ENCODE measurements at regions of chr14 and their contacts with region 1.

Region 1: DNA sequence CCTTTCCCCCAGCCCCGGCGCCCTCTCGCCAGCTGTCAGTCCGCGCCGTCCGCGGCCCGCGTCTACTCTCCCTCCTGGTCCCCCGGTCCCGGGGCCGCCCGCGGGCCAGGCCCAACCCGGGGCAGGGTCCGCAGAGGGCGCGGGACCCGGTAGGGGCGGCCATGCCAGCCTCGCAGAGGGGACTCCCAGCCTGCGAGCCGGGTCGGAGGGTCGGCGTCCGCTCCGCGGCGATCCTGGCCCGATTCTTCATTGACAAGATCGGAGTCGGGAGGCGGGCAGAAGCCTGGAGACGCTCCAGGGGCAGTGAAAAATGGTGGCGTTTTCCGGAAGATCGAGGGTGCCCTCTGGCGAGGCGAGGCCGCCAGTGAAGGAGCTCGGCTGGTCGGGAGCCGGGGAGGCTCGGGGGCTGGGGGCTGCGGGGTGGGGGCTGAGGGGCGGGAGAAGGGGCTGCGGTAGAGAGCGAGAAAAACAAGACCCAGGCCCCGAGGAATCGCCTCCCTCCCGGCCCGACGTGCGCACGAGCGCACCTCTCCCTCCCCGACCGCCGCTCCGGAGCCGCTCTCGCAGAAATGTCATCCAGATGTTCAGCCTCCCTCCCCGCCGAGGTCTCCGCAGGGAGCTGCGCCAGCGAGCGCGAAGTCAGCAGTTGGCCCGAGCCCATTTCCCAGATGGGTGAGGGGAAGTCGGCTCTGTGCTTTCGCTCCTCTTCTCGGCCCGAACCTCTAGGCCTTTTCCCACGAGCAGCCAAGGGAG is 647 bp upstream of the TGFB3 start:
- DNase-seq: peak; percentile 64 to 89 (median 73)
- ATAC-seq: peak; percentile 69
- H3K4me3 ChIP-seq: peak overlapping the region; percentile 58
- H3K4me3 Mint-ChIP-seq: peak overlapping the region; percentile 93
- H3K27ac ChIP-seq: peak overlapping the region; percentile 40 to 43
- H3K27ac Mint-ChIP-seq: peak overlapping the region; percentile 83
- H3K4me1 ChIP-seq: peaks cover 57% of the 10 kb centered on the region
- H3K4me1 Mint-ChIP-seq: peaks cover 58% of the 10 kb centered on the region
- H3K27me3 ChIP-seq: no peaks in the 10 kb centered on the region
- H3K27me3 Mint-ChIP-seq: no peaks in the 10 kb centered on the region
- CTCF ChIP-seq: peak; percentile 61

Region 2: DNA sequence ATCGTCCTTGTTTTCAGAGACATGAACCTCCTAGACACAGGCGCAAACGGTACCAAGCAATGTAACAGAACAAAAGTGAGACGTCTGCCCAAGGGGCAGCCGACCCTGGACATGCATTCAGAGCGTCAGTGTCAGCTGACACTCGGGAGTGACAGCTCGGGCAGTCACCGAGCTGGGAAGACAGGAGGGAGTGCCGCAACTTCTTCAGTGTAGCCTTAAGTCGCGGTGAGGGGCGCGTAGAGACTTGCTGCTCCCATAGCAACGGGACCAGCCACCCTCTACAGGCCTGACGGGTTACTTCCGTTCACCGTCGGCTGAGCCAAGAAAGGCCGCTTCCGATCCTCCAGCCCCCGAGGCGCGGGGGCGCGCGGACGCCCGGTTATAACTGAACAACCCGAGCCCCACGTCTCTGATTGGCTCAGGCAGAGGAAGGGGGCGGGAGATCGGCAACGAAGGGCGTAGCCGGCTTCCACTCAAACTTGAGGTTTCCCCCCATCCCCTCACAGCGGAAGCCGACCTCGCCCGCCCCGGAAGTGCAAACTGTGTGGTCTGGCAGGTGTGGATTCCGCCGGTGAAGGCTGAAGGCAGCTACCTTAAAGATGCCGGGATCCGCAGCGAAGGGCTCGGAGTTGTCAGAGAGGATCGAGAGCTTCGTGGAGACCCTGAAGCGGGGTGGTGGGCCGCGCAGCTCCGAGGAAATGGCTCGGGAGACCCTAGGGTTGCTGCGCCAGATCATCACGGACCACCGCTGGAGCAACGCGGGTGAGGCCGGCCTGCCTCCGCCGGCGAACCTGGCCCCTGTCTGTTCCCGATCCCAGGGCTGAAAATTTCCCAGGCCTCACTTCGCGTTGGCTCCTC is 979.8 kb before region 1 on chr14 and contains the start of gene EIF2B2:
- CTCF ChIA-PET with region 1: no interaction called
- POLR2A ChIA-PET with region 1: no interaction called
- intact Hi-C with region 1: loop called in 1 of 2 experiments (anchors 5 kb)
- DNase-seq: peak; percentile 97 to 100 (median 98)
- ATAC-seq: peak; percentile 96
- H3K4me3 ChIP-seq: peak within 1 kb of the TSS; percentile 73
- H3K4me3 Mint-ChIP-seq: peak within 1 kb of the TSS; percentile 99
- H3K27ac ChIP-seq: peak within 1 kb of the TSS; percentile 83 to 96
- H3K27ac Mint-ChIP-seq: peak within 1 kb of the TSS; percentile 93
- H3K4me1 ChIP-seq: peaks cover 28% of the 10 kb centered on the region
- H3K4me1 Mint-ChIP-seq: peaks cover 51% of the 10 kb centered on the region
- H3K27me3 ChIP-seq: no peaks in the 10 kb centered on the region
- H3K27me3 Mint-ChIP-seq: no peaks in the 10 kb centered on the region
- CTCF ChIP-seq: no peak
- total RNA-seq, gene EIF2B2: 21.0 to 24.2 TPM

Region 3: DNA sequence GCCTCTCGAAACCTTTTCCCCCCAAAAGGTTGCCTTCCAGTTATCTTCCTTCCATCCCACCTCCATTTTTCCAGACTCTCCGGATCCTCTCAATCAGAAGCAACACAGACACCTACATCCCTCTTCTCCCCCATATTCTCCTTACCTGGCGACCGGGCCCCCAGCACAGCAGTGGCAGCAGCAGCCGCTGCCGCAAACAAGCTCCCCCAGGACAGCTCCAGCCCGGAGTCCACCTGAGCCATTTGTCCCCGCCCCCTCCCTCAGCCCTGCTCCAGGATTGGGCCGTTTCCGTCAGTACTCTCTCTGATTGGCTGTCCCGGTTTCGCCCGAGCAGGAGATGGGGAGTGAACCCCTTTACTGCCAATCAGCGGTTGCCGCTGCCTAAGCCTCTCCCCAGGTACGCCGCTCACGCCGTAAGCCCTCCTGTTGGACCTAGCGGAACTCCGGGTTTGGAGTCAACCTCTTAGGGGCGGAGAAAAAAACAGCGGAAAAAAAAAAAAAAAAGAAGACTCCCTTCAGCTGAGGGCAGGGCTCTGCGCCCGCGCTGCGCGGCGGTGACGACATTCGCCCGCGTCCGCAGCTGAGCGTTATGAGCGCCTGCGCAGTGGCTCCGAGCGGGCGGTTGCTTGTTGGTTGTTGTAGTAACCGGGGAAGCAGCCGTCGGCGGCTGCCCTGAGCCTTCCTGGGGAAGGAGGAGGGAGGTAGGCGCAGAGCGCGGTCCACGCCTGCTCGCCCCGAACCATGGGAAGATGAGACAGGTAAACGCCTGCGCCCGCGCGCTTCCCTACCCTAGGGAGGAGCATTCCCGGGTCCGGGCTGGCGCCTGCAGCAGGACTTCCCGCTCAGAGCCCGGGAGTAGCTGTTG is 321.6 kb before region 1 on chr14 and contains the starts of genes ERG28 and TTLL5:
- CTCF ChIA-PET with region 1: interaction called, 5 read pairs
- POLR2A ChIA-PET with region 1: interaction called, 5 read pairs
- intact Hi-C with region 1: loop called in 1 of 2 experiments (anchors 2 kb)
- DNase-seq: peak; percentile 93 to 99 (median 96)
- ATAC-seq: peak; percentile 93
- H3K4me3 ChIP-seq: peak within 1 kb of the TSS; percentile 96
- H3K4me3 Mint-ChIP-seq: peak within 1 kb of the TSS; percentile 95
- H3K27ac ChIP-seq: peak within 1 kb of the TSS; percentile 87 to 91
- H3K27ac Mint-ChIP-seq: peak within 1 kb of the TSS; percentile 91
- H3K4me1 ChIP-seq: peaks cover 16% of the 10 kb centered on the region
- H3K4me1 Mint-ChIP-seq: peaks cover 47% of the 10 kb centered on the region
- H3K27me3 ChIP-seq: no peaks in the 10 kb centered on the region
- H3K27me3 Mint-ChIP-seq: no peaks in the 10 kb centered on the region
- CTCF ChIP-seq: no peak
- total RNA-seq, gene ERG28: 5.7 to 5.8 TPM
- total RNA-seq, gene TTLL5: 19.8 to 26.4 TPM

Region 4: GRCh38 chr14:75906676-75907280 is 75.7 kb before region 1 on chr14:
- CTCF ChIA-PET with region 1: interaction called, 52 read pairs
- POLR2A ChIA-PET with region 1: interaction called, 20 read pairs
- intact Hi-C with region 1: loop called (anchors 1 kb)
- DNase-seq: peak; percentile 22 to 81 (median 62)
- ATAC-seq: peak; percentile 51
- H3K4me3 ChIP-seq: no peak overlapping the region
- H3K4me3 Mint-ChIP-seq: no peak overlapping the region
- H3K27ac ChIP-seq: no peak overlapping the region
- H3K27ac Mint-ChIP-seq: no peak overlapping the region
- H3K4me1 ChIP-seq: no peaks in the 10 kb centered on the region
- H3K4me1 Mint-ChIP-seq: no peaks in the 10 kb centered on the region
- H3K27me3 ChIP-seq: no peaks in the 10 kb centered on the region
- H3K27me3 Mint-ChIP-seq: no peaks in the 10 kb centered on the region
- CTCF ChIP-seq: peak; percentile 97

Region 5: DNA sequence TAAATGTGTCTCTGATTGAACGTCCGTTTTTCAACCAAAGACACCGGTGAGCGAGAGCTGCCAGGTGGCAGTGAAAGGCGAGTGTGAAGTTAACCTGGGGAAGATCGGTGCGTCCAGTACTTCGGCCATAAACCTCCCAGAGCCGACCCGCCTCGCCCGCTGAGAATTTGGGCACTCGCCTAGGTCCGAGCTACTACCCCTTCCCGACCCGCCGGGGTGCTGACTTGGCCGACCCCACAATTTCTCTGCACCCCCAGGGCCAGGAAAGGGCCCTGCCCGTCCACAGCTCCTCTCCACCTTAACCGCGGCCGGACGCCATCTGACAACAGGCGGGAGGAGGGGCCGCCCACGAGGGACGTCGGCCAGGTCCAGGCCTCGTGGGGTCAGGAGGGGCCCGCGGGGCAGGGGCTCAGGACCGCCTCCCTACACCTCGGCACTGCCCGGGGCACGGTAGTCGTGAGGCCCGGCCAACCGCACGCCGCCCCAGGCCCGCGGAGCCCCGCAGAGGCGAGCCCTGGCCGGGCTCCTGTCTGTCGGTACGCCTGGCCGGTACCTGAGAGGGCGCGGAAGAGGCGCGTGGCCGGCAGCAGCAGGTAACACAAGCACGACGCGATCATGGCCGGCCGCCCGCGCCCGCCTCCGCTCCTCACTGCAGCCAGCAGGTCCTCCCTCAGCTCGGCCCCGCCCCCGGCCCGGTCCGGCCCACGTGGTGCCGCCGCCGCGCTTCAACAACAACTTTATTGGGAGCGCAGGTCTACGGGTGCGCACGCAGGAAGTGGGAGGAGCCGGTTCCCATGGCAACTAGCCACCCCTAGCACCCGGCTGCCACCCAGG is 830.0 kb after region 1 on chr14 and contains the start of gene ANGEL1:
- CTCF ChIA-PET with region 1: no interaction called
- POLR2A ChIA-PET with region 1: no interaction called
- intact Hi-C with region 1: loop called in 1 of 2 experiments (anchors 5 kb)
- DNase-seq: peak; percentile 94 to 99 (median 98)
- ATAC-seq: peak; percentile 90
- H3K4me3 ChIP-seq: peak within 1 kb of the TSS; percentile 84
- H3K4me3 Mint-ChIP-seq: peak within 1 kb of the TSS; percentile 97
- H3K27ac ChIP-seq: peak within 1 kb of the TSS; percentile 67 to 85
- H3K27ac Mint-ChIP-seq: peak within 1 kb of the TSS; percentile 96
- H3K4me1 ChIP-seq: peaks cover 28% of the 10 kb centered on the region
- H3K4me1 Mint-ChIP-seq: peaks cover 35% of the 10 kb centered on the region
- H3K27me3 ChIP-seq: no peaks in the 10 kb centered on the region
- H3K27me3 Mint-ChIP-seq: no peaks in the 10 kb centered on the region
- CTCF ChIP-seq: no peak
- total RNA-seq, gene ANGEL1: 10.1 to 10.4 TPM

Measured in CD4-positive, alpha-beta T cell (primary cell).